IMR-90 (cell line): ENCODE measurements at regions of chr6 and their contacts with region 1.

Region 1: GRCh38 chr6:45772886-45773495 is 242.7 kb downstream of the CLIC5 start:
- DNase-seq: no peak
- ATAC-seq: no peak
- H3K4me3 ChIP-seq: no peak overlapping the region
- H3K27ac ChIP-seq: no peak overlapping the region
- H3K4me1 ChIP-seq: no peaks in the 10 kb centered on the region
- H3K27me3 ChIP-seq: peaks cover 12% of the 10 kb centered on the region
- CTCF ChIP-seq: no peak
- POLR2A ChIP-seq: no peak
- RAD21 ChIP-seq: no peak

Region 2: GRCh38 chr6:45462190-45463134 is 310.5 kb before region 1 on chr6:
- CTCF ChIA-PET with region 1: no interaction called
- POLR2A ChIA-PET with region 1: no interaction called
- dilution Hi-C with region 1: no loop called
- in situ Hi-C with region 1: no loop called
- intact Hi-C with region 1: no loop called
- DNase-seq: no peak
- ATAC-seq: no peak
- H3K4me3 ChIP-seq: no peak overlapping the region
- H3K27ac ChIP-seq: no peak overlapping the region
- H3K4me1 ChIP-seq: peaks cover 3% of the 10 kb centered on the region
- H3K27me3 ChIP-seq: no peaks in the 10 kb centered on the region
- CTCF ChIP-seq: no peak
- POLR2A ChIP-seq: no peak
- RAD21 ChIP-seq: no peak

Region 3: GRCh38 chr6:45532721-45533210 is 240.2 kb before region 1 on chr6:
- CTCF ChIA-PET with region 1: no interaction called
- POLR2A ChIA-PET with region 1: interaction called, 13 read pairs
- dilution Hi-C with region 1: no loop called
- in situ Hi-C with region 1: no loop called
- intact Hi-C with region 1: no loop called
- DNase-seq: peak; percentile 68
- ATAC-seq: peak; percentile 75
- H3K4me3 ChIP-seq: peak overlapping the region; percentile 40; the same call in 1 of the 2 replicates
- H3K27ac ChIP-seq: 0 out of 2 replicates have a peak overlapping the region, but pooled peaks have one; percentile 7
- H3K4me1 ChIP-seq: peaks cover 6% of the 10 kb centered on the region
- H3K27me3 ChIP-seq: no peaks in the 10 kb centered on the region
- CTCF ChIP-seq: no peak
- POLR2A ChIP-seq: no peak
- RAD21 ChIP-seq: no peak